K562 (cell line): ENCODE measurements at regions of chr16 and their contacts with region 1.

Region 1: DNA sequence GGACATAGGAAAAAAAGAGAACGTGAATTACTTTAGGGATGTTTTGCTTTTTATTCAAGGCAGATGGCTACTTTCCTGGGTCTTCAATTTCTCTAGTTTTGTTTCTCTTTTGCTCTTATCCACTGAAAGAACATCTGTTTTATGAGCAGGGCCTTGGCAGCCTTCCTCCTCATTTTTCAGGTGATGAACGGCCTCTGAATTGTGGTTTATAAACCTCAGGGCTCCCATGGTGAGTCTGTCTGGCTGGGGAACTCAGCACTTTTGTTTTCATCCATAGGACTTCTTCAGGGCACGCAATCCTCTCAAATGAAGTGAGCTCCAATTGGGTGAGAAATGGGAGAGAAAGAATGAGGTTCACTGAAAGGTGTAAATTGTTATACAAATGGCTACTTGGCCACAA is 186.4 kb upstream of the ERCC4 start:
- DNase-seq: no peak
- ATAC-seq: no peak
- H3K4me3 ChIP-seq: no peak overlapping the region
- H3K27ac ChIP-seq: no peak overlapping the region
- H3K4me1 ChIP-seq: no peaks in the 10 kb centered on the region
- H3K27me3 ChIP-seq: no peaks in the 10 kb centered on the region
- CTCF ChIP-seq: no peak
- EP300 ChIP-seq: no peak
- POLR2A ChIP-seq: no peak
- RAD21 ChIP-seq: no peak

Region 2: DNA sequence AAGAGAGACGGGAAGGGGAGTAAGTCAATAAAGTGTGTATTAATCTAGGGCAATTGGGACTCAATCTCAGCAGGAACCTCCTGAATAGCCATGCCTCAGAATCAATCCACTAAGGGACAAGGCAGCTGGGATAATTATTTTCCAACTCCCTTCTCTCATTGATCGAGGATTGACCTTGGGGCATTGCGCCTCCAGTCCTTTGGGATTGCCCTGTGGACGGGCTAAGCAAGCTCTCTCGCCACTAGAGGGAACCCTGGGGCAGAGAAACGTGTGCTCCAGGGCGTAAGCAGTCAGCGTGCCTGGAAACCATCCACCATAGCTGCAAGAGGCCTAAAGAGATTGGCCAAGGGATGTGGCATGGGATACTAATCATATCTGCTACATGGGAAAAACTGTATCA is 132.5 kb after region 1 on chr16:
- CTCF ChIA-PET with region 1: no interaction called
- POLR2A ChIA-PET with region 1: no interaction called
- in situ Hi-C with region 1: no loop called
- intact Hi-C with region 1: loop called (anchors 10 kb)
- DNase-seq: peak; percentile 61 to 77 (median 67)
- ATAC-seq: peak; percentile 99
- H3K4me3 ChIP-seq: no peak overlapping the region
- H3K27ac ChIP-seq: no peak overlapping the region
- H3K4me1 ChIP-seq: no peaks in the 10 kb centered on the region
- H3K27me3 ChIP-seq: no peaks in the 10 kb centered on the region; a peak in 2 of 5 replicates
- CTCF ChIP-seq: peak; percentile 72 to 86 (median 80)
- EP300 ChIP-seq: no peak
- POLR2A ChIP-seq: no peak
- RAD21 ChIP-seq: peak; percentile 35 to 71